Activated naive CD4-positive, alpha-beta T cell treated with anti-CD3 and anti-CD28 coated beads for 36 hours (primary cell): ENCODE measurements at regions of chr2 and their contacts with region 1.

Region 1: DNA sequence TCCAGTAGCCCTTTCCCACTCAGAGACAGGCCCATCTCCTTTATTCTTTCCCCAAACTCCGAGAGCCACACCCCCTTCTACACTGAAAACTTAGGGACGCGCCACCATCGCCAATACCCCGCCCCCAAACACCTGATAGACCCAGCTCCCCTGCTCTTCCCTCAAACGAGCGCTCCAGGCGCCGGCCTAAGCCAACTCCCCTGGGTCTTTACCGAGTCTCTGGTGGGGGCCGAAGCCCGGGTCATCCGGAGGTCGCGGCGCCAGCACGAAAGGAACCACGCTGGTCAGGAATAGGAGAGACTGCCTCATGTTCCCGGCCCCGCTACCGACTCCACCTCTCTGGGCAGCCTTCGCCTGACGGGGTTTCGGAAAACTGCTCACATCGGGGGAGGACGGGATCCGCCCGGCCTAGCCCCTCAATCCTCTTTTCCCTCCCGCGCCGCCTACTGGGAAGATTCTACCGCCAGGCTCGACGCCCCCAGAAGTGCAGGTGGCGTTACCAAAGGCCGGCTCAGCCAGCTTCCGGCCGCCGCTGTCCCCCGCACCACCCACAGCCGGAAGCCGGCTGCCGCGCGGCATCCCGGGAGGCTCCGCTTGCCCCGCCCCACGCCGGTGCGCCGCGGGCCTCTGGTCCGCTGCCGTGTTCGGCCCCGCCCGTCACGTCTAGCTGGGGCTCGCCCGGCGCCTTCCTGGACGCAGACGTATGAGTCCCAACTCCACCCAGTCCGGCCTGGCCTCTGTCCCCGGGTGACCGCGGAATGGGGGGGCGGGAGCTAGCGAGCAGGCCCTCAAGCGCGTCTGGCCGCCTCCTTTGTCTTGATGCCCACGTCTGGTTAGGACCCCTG is at the start of gene ADAM17:
- DNase-seq: peak; percentile 88
- H3K4me3 Mint-ChIP-seq: peak within 1 kb of the TSS; percentile 98
- H3K27ac Mint-ChIP-seq: peak within 1 kb of the TSS; percentile 96
- H3K4me1 Mint-ChIP-seq: peaks cover 46% of the 10 kb centered on the region
- H3K27me3 Mint-ChIP-seq: no peaks in the 10 kb centered on the region
- total RNA-seq, gene ADAM17: 10.5 to 11.0 TPM

Region 2: DNA sequence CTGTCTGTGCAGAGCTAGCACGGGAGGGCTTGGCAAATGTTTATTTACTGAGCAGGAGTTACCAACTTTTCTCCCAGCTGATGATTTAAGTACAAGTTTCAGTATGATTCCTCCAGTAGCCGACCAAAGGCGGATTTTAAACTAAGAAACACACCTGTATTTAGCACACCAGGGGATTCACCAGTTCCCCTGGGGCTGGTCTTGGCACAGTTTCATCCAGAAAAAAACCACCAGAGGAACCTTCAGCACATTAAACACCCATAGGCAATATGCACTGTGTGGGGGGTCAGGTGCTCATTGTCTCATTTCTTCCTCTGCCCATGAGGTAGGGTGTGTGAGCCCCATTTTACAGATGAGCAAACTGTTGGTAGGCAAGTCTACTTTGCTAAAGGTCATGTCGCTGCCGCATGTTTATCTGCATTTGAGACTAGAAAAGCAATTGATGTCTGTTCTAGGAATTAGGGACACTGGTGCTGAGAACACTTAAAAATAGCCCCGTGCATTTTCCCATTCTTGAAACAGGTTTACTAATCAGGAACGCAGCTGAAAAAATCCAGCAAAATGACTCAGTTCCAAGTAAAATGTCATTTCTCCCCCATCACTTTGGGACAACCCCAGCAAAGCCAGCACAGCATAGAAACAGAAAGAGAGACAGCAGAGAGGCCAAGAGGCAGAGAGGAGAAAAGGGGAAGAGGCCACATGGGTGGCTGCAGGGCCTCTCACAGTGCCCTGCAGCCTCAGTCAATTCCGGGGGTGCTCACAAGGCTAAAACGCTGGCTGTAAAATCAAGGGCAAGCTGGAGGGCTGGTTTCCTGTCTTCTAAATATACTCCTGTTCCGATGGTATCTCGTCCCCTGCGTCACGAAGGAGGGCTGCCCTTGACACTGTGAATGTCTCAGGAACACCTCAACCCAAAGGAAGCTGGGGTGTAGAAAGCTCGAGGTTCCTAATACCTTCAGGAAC is 1040.4 kb before region 1 on chr2:
- CTCF ChIA-PET with region 1: no interaction called
- intact Hi-C with region 1: loop called (anchors 10 kb)
- DNase-seq: peak; percentile 84
- H3K4me3 Mint-ChIP-seq: peak overlapping the region; percentile 42
- H3K27ac Mint-ChIP-seq: peak overlapping the region; percentile 96
- H3K4me1 Mint-ChIP-seq: peaks cover 46% of the 10 kb centered on the region
- H3K27me3 Mint-ChIP-seq: no peaks in the 10 kb centered on the region

Region 3: GRCh38 chr2:8525582-8526402 is 1029.7 kb before region 1 on chr2:
- CTCF ChIA-PET with region 1: no interaction called
- intact Hi-C with region 1: no loop called
- DNase-seq: no peak
- H3K4me3 Mint-ChIP-seq: no peak overlapping the region
- H3K27ac Mint-ChIP-seq: no peak overlapping the region
- H3K4me1 Mint-ChIP-seq: peaks cover 18% of the 10 kb centered on the region
- H3K27me3 Mint-ChIP-seq: no peaks in the 10 kb centered on the region

Region 4: DNA sequence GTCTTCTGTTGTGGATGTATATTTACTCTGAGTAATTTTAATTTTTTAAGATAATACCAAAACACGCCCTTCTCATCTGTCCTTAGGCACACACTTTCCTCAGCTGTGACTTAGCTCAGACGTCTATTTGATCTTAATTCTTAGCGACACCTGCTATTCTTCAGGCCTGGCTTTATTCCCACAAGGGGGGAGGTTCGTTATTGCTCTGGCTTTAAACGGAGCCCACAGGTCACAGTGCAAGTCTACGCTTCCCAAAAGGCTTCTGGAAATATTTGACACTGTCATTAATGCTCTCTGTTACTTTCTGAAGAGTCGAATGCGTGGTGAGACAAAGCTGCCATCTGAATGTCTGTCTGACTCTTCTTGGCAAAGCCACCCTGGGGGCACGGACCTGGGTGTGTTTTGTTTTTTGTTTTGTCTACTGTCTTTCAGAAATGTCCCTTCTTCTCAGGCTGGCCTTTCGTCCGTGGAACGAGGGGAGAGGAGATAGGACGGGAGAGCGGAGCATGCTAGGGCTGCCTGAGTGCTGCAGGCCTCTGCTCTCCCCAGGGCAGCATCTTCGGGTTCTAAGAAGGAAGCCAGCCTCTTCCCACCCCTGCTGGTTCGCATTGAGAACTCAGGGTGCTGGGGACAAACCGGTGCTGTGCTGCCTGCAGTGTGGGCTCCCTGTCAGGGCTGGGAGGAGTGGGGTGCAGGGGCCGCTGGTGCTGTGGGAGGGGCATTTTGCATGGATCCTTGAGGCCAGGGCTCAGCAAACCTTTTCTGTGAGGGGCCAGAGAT is 287.0 kb before region 1 on chr2:
- CTCF ChIA-PET with region 1: no interaction called
- intact Hi-C with region 1: no loop called
- DNase-seq: no peak
- H3K4me3 Mint-ChIP-seq: no peak overlapping the region
- H3K27ac Mint-ChIP-seq: no peak overlapping the region
- H3K4me1 Mint-ChIP-seq: no peaks in the 10 kb centered on the region
- H3K27me3 Mint-ChIP-seq: peaks cover 5% of the 10 kb centered on the region

Region 5: DNA sequence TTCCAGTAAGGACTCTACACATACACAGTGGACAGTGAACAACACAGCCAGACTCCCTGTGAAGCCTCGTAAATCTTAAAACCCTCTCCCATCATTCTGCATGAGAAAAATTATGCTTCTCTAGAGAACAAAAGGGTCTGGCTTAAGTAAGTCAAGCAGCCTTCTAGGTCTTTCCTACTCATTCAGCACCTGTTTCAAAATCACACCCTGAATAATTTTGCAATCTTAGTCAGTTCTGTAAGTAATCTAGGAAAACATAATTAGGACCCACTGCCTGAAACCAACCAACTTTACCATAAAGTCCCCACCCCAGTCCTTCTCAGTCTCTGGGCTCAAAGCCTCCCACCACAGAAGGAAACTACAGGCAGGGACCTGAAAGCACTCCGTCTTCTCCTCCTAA is 61.4 kb before region 1 on chr2:
- CTCF ChIA-PET with region 1: no interaction called
- intact Hi-C with region 1: loop called (anchors 1 kb)
- DNase-seq: no peak
- H3K4me3 Mint-ChIP-seq: no peak overlapping the region
- H3K27ac Mint-ChIP-seq: peak overlapping the region; percentile 61
- H3K4me1 Mint-ChIP-seq: peaks cover 32% of the 10 kb centered on the region
- H3K27me3 Mint-ChIP-seq: no peaks in the 10 kb centered on the region

Region 6: GRCh38 chr2:9656270-9656766 is 100.8 kb after region 1 on chr2:
- CTCF ChIA-PET with region 1: no interaction called
- intact Hi-C with region 1: loop called (anchors 1 kb)
- DNase-seq: peak; percentile 75
- H3K4me3 Mint-ChIP-seq: no peak overlapping the region
- H3K27ac Mint-ChIP-seq: peak overlapping the region; percentile 74
- H3K4me1 Mint-ChIP-seq: peaks cover 19% of the 10 kb centered on the region
- H3K27me3 Mint-ChIP-seq: no peaks in the 10 kb centered on the region

Region 7: DNA sequence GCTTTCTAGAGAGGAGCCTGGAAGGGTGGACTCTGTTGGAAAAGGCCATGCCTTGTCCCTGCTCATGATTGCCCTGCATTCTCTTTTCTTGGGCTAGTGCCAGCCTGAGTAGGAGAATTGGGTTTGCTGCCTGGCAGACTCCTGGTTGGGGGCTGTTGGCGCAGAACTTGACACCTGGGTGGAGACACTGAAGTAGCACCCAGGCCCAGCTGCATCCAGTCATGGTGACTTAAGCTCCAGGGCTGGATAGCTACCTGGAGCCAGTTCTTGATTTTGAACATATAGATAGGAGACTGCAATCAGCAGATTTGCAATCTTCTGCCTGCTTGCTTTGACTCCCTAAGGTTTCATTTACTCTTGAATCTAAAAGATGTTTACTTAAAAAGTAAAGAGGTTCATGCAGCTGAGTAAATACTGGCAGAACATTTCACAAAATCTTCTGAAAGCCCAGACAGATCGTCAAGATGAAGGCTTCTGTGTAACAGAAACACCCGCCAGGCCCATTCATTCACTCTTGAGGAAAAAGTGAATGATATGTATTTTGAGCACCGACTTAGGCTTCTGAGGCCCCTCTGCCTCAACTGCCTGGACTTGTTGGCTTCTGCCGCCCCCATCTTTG is 113.3 kb after region 1 on chr2:
- CTCF ChIA-PET with region 1: no interaction called
- intact Hi-C with region 1: no loop called
- DNase-seq: no peak
- H3K4me3 Mint-ChIP-seq: no peak overlapping the region
- H3K27ac Mint-ChIP-seq: no peak overlapping the region
- H3K4me1 Mint-ChIP-seq: peaks cover 5% of the 10 kb centered on the region
- H3K27me3 Mint-ChIP-seq: no peaks in the 10 kb centered on the region

Region 8: DNA sequence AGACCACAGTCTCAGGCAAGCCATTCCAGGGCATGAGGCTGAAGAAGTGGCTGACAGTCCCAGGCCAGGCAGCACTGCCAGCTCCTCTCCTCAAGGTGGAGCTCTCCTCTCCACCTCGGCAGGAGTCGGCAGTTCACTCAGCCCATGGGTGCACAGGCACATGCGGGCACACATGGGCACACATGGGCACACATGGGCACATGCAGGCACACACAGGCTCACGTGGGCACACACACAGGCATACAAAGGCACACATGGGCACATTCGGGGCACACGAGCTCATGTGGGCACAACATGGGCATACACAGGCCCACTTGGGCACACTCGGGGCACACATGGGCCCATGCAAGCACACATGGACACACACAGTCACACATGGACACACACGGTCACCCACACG is 222.5 kb after region 1 on chr2:
- CTCF ChIA-PET with region 1: no interaction called
- intact Hi-C with region 1: loop called (anchors 1 kb)
- DNase-seq: peak; percentile 42
- H3K4me3 Mint-ChIP-seq: no peak overlapping the region
- H3K27ac Mint-ChIP-seq: no peak overlapping the region
- H3K4me1 Mint-ChIP-seq: peaks cover 40% of the 10 kb centered on the region
- H3K27me3 Mint-ChIP-seq: no peaks in the 10 kb centered on the region

Region 9: GRCh38 chr2:10302479-10303180 is 747.1 kb after region 1 on chr2 and contains the start of gene HPCAL1:
- CTCF ChIA-PET with region 1: no interaction called
- intact Hi-C with region 1: loop called (anchors 10 kb)
- DNase-seq: peak; percentile 84
- H3K4me3 Mint-ChIP-seq: peak within 1 kb of the TSS; percentile 99
- H3K27ac Mint-ChIP-seq: peak within 1 kb of the TSS; percentile 83
- H3K4me1 Mint-ChIP-seq: peaks cover 71% of the 10 kb centered on the region
- H3K27me3 Mint-ChIP-seq: no peaks in the 10 kb centered on the region
- total RNA-seq, gene HPCAL1: 71.4 to 73.8 TPM